ENCODE measurements at regions of chr12 and their contacts with region 1.

Region 1: GRCh38 chr12:118061011-118061875 is at the start of gene WSB2:
- DNase-seq: peak; percentile 93
- total RNA-seq, gene WSB2: 95.3 TPM

Region 2: GRCh38 chr12:118016424-118017264 is 44.6 kb before region 1 on chr12 and contains the start of gene RFC5:
- intact Hi-C with region 1: loop called (anchors 2 kb)
- DNase-seq: peak; percentile 99
- total RNA-seq, gene RFC5: 2.6 TPM

Region 3: DNA sequence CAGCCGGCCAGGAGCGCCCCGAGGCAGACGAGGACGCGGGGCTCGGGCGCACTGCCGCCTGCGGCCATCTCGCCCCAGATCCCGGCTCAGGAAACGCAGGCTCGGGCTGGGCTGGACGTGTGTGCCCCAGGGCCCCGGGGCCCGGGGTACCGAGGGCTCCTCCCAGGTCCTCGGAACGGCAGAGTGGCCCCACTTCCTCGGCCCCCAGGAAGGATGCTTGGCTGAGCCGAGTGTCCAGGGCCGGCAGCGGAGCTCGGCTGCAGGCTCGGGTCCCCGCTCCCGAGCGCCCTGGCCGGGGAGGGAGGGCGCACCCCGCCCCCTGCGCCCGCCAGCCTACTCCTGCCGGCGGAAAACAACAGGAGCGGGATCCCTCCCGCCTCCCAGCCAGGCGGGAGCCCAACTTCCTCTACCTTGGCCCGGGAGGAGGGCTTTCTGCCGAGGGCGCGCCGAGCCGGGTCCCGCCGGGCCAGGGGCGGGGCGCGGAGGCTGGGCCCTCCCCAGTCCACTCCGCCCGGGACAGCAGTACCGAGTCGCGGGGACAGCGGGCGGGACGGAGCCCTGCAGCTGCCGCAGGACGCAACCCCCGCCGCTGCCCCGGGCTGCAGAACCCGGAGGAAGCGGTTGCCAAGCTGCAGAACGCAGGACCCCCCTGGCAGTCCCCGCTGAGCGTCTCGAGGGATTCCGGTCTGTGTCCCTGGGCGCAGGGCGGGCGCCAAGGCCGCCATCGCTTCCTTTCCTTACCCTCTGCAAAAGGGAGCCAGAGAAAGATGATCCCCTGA is 42.5 kb after region 1 on chr12 and contains the start of gene VSIG10:
- intact Hi-C with region 1: loop called (anchors 1 kb)
- DNase-seq: peak; percentile 88
- total RNA-seq, gene VSIG10: 10.0 TPM

Region 4: DNA sequence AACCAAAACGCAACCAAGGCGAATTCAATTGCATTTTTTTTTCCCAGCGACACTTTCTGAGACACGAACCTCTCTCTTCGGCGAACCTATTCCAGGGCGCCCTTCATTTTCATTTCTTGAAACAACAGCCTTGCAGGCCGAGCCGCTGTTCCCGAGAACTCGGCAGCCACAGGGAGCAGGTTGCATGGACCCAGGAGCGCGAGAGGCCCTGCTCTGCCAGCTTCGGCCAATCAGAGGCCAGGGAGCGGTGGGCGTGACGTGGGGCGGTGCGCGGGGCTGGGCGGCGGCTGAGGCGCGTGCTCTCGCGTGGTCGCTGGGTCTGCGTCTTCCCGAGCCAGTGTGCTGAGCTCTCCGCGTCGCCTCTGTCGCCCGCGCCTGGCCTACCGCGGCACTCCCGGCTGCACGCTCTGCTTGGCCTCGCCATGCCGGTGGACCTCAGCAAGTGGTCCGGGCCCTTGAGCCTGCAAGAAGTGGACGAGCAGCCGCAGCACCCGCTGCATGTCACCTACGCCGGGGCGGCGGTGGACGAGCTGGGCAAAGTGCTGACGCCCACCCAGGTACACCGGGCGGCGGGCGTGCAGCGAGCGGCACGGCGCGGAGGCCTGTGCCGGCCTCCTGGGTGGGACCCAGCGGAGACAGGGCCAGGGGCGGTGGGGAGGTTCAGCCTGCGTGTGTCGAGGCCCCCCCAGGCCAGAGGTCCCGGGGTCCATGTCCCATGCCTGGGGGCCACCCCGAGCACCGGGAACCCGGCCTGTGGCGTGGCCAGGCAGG is 74.7 kb after region 1 on chr12 and contains the start of gene PEBP1:
- intact Hi-C with region 1: loop called (anchors 2 kb)
- DNase-seq: peak; percentile 97
- total RNA-seq, gene PEBP1: 344 TPM

Region 5: GRCh38 chr12:118237052-118237665 is 175.9 kb after region 1 on chr12:
- intact Hi-C with region 1: no loop called
- DNase-seq: no peak